ENCODE measurements at regions of chr20 and their contacts with region 1.

Region 1: DNA sequence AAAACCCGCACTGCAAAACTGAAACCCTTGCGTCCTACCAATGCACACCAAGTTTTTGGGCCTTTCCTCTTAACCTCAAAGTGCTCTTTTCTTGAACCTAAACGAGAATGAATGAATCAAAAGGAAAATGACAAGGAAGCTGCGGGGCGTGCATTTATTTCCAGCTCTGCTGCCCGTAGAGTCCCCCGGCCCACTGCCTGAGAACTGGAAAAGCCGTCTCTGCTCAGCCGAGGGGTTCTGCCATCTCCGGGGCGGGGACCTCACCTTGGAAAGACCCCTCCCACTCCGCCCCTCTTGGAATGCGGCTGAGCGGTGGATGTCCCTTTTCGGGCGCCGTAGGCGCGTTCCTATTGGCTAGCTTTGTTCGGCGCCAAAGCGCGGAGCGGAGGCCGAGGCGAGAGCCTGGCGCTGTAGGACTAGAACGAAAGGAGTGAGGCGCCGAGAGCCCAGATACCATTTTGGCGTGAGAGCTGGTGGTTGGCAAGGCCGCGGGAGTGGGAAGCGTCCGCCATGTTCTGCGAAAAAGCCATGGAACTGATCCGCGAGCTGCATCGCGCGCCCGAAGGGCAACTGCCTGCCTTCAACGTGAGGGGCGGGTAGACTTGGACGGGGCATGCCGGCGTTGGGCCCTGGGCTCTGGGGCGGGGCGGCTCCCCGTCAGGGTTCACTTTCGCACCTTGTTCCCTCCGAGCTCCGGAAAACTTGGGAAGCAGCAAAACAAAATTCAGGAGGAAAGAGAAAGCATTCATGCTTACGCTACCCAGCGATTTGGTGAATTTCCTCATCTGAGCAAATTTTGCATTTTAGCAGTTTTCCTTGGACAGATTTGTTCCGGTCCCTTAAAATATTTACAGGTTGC is at the start of gene GINS1:
- DNase-seq: peak; percentile 89
- ATAC-seq: peak; percentile 94
- H3K4me3 Mint-ChIP-seq: peak within 1 kb of the TSS; percentile 82
- H3K27ac Mint-ChIP-seq: peak within 1 kb of the TSS; percentile 75
- H3K4me1 Mint-ChIP-seq: peaks cover 14% of the 10 kb centered on the region
- H3K27me3 Mint-ChIP-seq: no peaks in the 10 kb centered on the region
- CTCF ChIP-seq: no peak
- total RNA-seq, gene GINS1: 34.9 to 35.9 TPM

Region 2: GRCh38 chr20:25294459-25295385 is 112.8 kb before region 1 on chr20:
- CTCF ChIA-PET with region 1: interaction called, 19 read pairs
- POLR2A ChIA-PET with region 1: interaction called, 3 read pairs
- intact Hi-C with region 1: no loop called
- DNase-seq: peak; percentile 70
- ATAC-seq: peak; percentile 90
- H3K4me3 Mint-ChIP-seq: no peak overlapping the region
- H3K27ac Mint-ChIP-seq: peak overlapping the region; percentile 62
- H3K4me1 Mint-ChIP-seq: peaks cover 6% of the 10 kb centered on the region
- H3K27me3 Mint-ChIP-seq: no peaks in the 10 kb centered on the region
- CTCF ChIP-seq: peak; percentile 73

Region 3: DNA sequence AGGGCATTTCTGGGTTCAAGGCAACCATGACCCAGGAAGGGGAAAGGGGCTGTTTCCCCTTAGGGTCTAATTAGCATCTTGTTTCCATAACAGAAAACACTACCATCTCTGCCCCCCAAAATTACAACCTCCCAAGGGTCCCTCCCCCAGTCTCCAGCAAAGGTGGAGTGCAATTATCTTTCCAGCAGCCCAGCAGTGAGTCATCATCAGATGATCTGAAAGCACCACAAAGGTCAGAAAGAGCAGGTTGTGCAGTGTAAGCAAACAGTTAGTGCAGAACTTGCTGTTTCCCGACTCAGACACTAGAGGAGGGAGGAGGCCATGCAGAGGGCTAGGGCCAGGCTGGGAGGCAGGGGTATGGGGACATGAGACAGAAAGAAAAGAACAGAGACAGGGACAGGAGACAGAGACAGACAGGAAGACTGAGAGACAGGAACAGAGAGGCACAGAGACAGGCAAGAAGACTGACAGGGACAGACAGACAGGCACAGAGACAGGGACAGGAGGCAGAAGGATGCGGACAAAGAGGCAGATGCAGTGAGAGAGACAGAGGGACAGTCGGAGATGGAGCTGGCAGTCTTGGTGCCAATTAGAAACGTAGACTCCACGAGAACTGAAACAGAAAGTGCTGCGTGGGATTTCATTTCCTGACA is 97.1 kb before region 1 on chr20:
- CTCF ChIA-PET with region 1: interaction called, 4 read pairs
- POLR2A ChIA-PET with region 1: no interaction called
- intact Hi-C with region 1: loop called (anchors 2 kb)
- DNase-seq: peak; percentile 77
- ATAC-seq: peak; percentile 97
- H3K4me3 Mint-ChIP-seq: peak overlapping the region; percentile 54
- H3K27ac Mint-ChIP-seq: peak overlapping the region; percentile 85
- H3K4me1 Mint-ChIP-seq: peaks cover 31% of the 10 kb centered on the region
- H3K27me3 Mint-ChIP-seq: no peaks in the 10 kb centered on the region
- CTCF ChIP-seq: peak; percentile 54

Measured in activated CD8-positive, alpha-beta T cell treated with anti-CD3 and anti-CD28 coated beads for 36 hours (primary cell).